Pancreas (tissue), 10 donors: ENCODE measurements at regions of chr5 and their contacts with region 1.

Region 1: GRCh38 chr5:78886341-78887230 is 98.5 kb downstream of the ARSB start:
- DNase-seq: no peak
- ATAC-seq: peak in 2 of 4 donors; percentile 37 to 48
- H3K4me3 ChIP-seq: no peak overlapping the region
- H3K27ac ChIP-seq: no peak overlapping the region
- H3K4me1 ChIP-seq: no peaks in the 10 kb centered on the region
- H3K27me3 ChIP-seq: no peaks in the 10 kb centered on the region
- CTCF ChIP-seq: peak; percentile 8 to 50 (median 33)

Region 2: DNA sequence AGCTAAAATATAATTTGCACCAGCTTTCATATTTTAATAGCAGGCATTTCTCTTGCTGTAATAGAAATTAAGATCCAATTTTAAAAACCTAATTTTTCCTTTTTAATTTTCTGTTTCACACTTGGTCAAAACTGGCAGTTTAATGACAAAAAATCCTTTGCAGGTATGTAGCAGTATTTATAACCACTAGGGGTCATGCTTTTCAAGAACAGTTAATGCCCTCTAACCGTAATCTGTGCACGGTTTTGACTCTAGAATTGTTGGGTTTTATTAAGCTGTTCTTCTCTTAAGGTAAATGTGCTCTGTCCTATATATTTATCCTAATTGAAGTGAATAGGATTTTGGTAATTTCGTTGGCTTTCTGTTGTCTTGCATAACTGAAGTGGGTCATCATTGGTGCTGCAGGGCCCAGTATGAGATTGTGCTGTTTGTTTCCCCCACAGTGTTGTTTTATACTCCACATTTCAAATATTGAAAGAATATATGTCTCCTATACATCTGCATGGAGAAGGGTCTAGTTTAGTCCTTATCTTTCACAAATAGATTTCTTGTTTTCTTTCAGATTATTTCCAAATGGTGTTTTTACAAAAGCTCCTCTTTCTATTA is 418.7 kb before region 1 on chr5:
- intact Hi-C with region 1: loop called in 1 of 3 experiments (anchors 10 kb)
- DNase-seq: no peak
- ATAC-seq: peak; percentile 58 to 87 (median 82)
- H3K4me3 ChIP-seq: no peak overlapping the region
- H3K27ac ChIP-seq: no peak overlapping the region
- H3K4me1 ChIP-seq: no peaks in the 10 kb centered on the region
- H3K27me3 ChIP-seq: no peaks in the 10 kb centered on the region
- CTCF ChIP-seq: peak; percentile 44 to 71 (median 64)

Region 3: GRCh38 chr5:79093762-79094161 is 207.2 kb after region 1 on chr5:
- intact Hi-C with region 1: no loop called
- DNase-seq: no peak
- ATAC-seq: peak in 3 of 4 donors; percentile 54 to 68 (median 56)
- H3K4me3 ChIP-seq: no peak overlapping the region
- H3K27ac ChIP-seq: no peak overlapping the region
- H3K4me1 ChIP-seq: peaks cover 0 to 9% (median 7%) of the 10 kb centered on the region in 3 donors
- H3K27me3 ChIP-seq: no peaks in the 10 kb centered on the region
- CTCF ChIP-seq: no peak

Region 4: DNA sequence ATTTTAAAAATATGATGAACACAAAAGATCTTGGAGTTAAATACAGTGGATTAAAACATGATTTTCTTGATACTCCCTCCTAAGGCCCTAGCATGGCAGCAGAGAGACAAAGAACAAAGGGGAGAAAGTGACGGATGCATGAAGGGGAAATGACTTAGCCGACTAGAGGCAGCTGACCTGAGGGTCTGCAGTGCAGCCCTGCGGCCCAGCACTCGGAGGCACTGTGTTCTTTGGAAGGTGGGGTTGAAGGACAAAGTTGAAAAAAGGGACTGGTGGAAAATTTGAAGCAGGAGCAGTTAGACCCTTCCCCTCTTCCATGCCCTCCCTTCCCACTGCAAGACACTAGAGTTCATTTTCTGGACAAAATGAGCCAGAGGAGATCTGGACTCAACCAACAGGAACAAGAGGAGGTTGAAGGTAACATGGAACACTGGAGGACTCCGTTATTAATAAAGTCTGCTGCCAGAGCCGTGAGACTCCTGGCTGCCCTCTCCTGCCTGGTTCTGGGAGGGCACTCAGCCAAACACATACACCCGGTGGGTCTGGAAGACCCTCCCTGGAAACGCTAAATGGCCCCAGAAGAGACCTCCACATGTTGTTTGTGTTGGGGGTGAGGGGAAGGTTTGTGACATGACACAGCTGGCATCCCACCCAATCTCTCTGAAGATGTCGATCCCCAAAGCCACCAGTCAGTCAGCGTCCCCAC is 447.4 kb after region 1 on chr5:
- intact Hi-C with region 1: no loop called
- DNase-seq: no peak
- ATAC-seq: no peak
- H3K4me3 ChIP-seq: no peak overlapping the region
- H3K27ac ChIP-seq: no peak overlapping the region
- H3K4me1 ChIP-seq: no peaks in the 10 kb centered on the region
- H3K27me3 ChIP-seq: no peaks in the 10 kb centered on the region
- CTCF ChIP-seq: no peak